Psoas muscle (tissue), 8 donors: ENCODE measurements at regions of chr15 and their contacts with region 1.

Region 1: GRCh38 chr15:99059010-99059981 is 45.6 kb upstream of the SYNM start:
- DNase-seq: peak; percentile 76 to 89
- ATAC-seq: peak; percentile 78 to 85 (median 81)
- H3K4me3 ChIP-seq: peak overlapping the region; percentile 71
- H3K27ac ChIP-seq: peak overlapping the region; percentile 90
- H3K4me1 ChIP-seq: peaks cover 18% of the 10 kb centered on the region
- H3K27me3 ChIP-seq: no peaks in the 10 kb centered on the region
- CTCF ChIP-seq: peak; percentile 88

Region 2: DNA sequence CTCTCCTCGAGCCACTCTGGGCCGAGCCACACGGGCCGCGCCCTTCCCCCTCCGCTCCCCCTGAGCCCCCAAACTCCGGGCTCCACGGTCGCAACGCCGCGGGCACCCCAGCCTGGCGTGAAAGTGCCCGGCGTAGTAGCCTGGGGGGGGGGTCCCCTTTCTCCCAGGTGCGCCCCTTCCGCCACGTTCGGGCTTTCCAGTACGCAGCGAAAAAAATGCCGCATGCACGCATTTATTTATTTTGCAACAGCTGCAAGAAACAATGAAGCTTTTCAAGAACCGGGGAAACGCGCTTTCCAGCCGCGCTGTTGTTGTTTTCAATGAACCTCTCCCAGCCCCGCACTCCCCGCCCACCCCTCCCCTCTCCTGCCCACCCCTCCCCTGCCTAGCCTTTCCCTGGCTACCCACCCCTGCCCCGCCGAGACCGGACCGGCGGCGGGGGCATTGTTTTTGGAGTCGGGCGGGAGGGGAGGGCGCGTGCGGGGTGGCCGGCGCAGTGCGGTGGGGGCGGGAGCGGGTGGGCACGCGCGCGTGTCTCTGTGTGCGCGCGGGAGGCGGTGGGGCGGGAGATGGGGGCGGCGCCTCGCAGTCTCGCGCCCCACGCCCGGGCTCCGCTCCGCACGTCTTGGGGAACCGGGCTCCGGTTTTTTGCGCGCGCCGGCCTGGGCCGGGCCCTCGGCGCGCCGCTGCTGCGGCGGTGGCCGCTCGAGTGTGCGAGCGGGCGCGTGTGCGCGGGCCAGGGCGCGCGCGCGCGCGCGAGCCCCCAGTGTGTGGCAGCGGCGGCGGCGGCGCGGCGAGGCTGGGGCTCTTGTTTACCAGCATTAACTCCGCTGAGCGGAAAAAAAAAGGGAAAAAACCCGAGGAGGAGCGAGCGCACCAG is 411.3 kb before region 1 on chr15 and contains the start of gene IGF1R:
- intact Hi-C with region 1: loop called (anchors 5 to 10 kb)
- DNase-seq: peak; percentile 88 to 93
- ATAC-seq: peak; percentile 72 to 88 (median 84)
- H3K4me3 ChIP-seq: peak within 1 kb of the TSS; percentile 94
- H3K27ac ChIP-seq: peak within 1 kb of the TSS; percentile 92
- H3K4me1 ChIP-seq: peaks cover 10% of the 10 kb centered on the region
- H3K27me3 ChIP-seq: peaks cover 0 to 13% (median 10%) of the 10 kb centered on the region in 3 donors
- CTCF ChIP-seq: no peak
- total RNA-seq, gene IGF1R: 12.0 to 20.4 (median 15.9) TPM

Region 3: GRCh38 chr15:98779463-98780071 is 279.7 kb before region 1 on chr15:
- intact Hi-C with region 1: loop called (anchors 5 kb)
- DNase-seq: peak; percentile 79 to 90
- ATAC-seq: peak; percentile 93 to 98 (median 96)
- H3K4me3 ChIP-seq: peak overlapping the region; percentile 6
- H3K27ac ChIP-seq: no peak overlapping the region
- H3K4me1 ChIP-seq: peaks cover 27% of the 10 kb centered on the region
- H3K27me3 ChIP-seq: no peaks in the 10 kb centered on the region
- CTCF ChIP-seq: peak; percentile 96

Region 4: GRCh38 chr15:98812716-98813441 is 246.4 kb before region 1 on chr15:
- intact Hi-C with region 1: no loop called
- DNase-seq: no peak
- ATAC-seq: no peak
- H3K4me3 ChIP-seq: no peak overlapping the region
- H3K27ac ChIP-seq: no peak overlapping the region
- H3K4me1 ChIP-seq: peaks cover 5% of the 10 kb centered on the region
- H3K27me3 ChIP-seq: no peaks in the 10 kb centered on the region
- CTCF ChIP-seq: no peak

Region 5: DNA sequence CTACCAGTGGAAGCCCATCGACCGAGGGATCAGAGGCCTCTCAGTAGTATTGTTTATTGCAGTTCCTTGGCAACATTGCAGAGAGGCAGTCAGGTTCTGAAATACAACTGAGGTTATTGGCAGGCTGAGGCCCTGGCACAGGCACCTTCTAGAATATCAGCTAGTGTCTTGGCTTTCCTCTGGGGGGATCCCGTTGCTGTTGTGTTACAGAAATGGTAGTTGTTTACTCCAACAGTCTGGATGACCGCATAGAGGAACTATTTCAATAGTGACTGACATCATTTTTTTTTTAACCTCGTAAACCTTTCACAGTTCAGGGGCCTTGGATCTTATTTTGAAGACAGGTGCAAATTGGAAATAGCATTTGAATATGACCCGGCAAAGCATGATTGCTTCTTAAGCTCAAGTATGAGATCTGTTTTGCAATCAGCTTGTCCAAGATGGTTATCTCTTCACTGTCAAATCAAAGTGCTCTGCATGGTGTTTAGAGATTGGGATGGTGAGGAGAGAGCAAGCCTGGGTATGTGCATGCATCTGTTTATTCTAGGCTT is 115.6 kb before region 1 on chr15:
- intact Hi-C with region 1: loop called (anchors 1 to 5 kb)
- DNase-seq: peak; percentile 61 to 92
- ATAC-seq: peak; percentile 84 to 92 (median 88)
- H3K4me3 ChIP-seq: peak overlapping the region; percentile 8
- H3K27ac ChIP-seq: peak overlapping the region; percentile 91
- H3K4me1 ChIP-seq: peaks cover 62% of the 10 kb centered on the region
- H3K27me3 ChIP-seq: no peaks in the 10 kb centered on the region
- CTCF ChIP-seq: no peak

Region 6: GRCh38 chr15:99014803-99015676 is 44.3 kb before region 1 on chr15:
- intact Hi-C with region 1: loop called in 1 of 2 experiments (anchors 5 kb)
- DNase-seq: peak; percentile 75 to 92
- ATAC-seq: peak; percentile 88 to 91 (median 88)
- H3K4me3 ChIP-seq: peak overlapping the region; percentile 68
- H3K27ac ChIP-seq: peak overlapping the region; percentile 98
- H3K4me1 ChIP-seq: peaks cover 29% of the 10 kb centered on the region
- H3K27me3 ChIP-seq: peaks cover 0 to 2% (median 0%) of the 10 kb centered on the region in 3 donors
- CTCF ChIP-seq: no peak

Region 7: GRCh38 chr15:99296386-99296785 is 237.1 kb after region 1 on chr15:
- intact Hi-C with region 1: no loop called
- DNase-seq: no peak
- ATAC-seq: no peak
- H3K4me3 ChIP-seq: no peak overlapping the region
- H3K27ac ChIP-seq: no peak overlapping the region
- H3K4me1 ChIP-seq: no peaks in the 10 kb centered on the region
- H3K27me3 ChIP-seq: no peaks in the 10 kb centered on the region
- CTCF ChIP-seq: no peak